ENCODE measurements at regions of chr13 and their contacts with region 1.

Region 1: DNA sequence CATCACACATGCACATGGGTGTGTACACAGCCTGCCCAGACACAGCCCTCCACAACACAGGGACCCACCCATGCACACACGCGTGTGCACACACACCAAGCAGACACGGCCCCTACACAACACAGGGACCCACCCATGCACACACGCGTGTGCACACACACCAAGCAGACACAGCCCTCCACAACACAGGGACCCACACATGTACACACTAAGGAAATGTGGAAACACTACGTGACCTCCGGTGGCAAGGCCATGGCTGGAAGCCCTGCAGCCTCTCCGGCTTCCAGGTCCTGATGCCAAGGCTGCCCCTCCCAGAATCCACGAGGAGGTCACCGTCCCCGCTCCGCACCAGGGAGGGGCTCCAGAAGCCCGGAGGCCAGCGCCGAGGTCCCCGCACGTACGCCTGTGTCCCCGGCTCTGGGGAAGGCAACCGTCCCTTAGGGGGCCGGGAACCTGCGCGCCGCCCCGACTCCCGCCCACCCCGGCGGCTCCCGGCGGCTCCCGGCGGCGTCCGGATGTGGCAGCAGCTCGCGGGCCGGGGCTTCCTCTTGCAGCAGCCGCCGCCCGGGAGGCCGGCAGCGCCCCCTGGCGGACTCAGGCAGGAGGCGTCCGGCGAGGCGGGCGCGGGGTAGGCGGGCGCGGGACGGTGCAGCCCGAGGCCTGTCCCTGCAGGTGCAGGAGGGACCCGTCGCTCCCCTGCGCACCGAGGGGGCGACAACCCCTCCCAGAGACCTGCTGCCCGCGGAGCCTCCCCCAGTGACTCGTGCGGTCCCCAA is 29.8 kb upstream of the GRTP1 start:
- DNase-seq: peak; percentile 47 to 94
- H3K4me3 ChIP-seq: peak overlapping the region; percentile 45
- CTCF ChIP-seq: peak in 1 of 3 donors; percentile 16
- POLR2A ChIP-seq: no peak

Region 2: DNA sequence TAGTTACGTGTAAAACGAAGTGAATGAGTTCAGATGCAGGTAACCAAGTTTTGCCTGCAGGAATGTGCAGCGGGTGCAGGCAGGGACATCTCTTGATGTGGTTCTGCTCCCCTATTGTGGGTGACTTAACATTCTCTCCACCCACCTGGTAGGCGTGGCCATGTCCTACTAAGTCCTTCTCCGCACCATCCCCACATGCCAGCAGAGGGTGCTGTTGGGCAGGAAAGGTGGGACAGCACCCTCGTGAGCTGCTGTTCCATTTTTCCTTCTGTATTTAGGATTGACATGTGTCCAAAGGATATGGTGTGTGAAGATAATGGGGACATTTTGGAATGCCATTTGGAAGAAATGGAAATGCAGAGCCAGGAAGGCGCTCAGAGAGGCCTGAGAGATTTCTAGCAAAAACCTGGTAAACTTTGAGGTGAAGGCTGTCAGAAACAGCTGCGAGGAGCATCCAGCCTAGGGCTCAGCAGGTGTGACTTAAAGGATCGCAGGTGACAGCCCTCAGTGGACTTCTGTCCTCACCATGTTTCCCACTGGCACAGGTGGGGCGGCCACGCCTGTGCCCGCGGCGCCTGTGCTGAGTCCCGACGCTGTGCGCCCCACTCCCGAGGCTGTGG is 451.0 kb before region 1 on chr13:
- intact Hi-C with region 1: loop called (anchors 10 kb)
- DNase-seq: peak; percentile 96 to 99
- H3K4me3 ChIP-seq: peak overlapping the region; percentile 18
- CTCF ChIP-seq: peak in 1 of 3 donors; percentile 65
- POLR2A ChIP-seq: no peak

Region 3: GRCh38 chr13:113275387-113275786 is 118.4 kb before region 1 on chr13:
- intact Hi-C with region 1: loop called (anchors 10 kb)
- DNase-seq: no peak
- H3K4me3 ChIP-seq: no peak overlapping the region
- CTCF ChIP-seq: no peak
- POLR2A ChIP-seq: no peak

Region 4: DNA sequence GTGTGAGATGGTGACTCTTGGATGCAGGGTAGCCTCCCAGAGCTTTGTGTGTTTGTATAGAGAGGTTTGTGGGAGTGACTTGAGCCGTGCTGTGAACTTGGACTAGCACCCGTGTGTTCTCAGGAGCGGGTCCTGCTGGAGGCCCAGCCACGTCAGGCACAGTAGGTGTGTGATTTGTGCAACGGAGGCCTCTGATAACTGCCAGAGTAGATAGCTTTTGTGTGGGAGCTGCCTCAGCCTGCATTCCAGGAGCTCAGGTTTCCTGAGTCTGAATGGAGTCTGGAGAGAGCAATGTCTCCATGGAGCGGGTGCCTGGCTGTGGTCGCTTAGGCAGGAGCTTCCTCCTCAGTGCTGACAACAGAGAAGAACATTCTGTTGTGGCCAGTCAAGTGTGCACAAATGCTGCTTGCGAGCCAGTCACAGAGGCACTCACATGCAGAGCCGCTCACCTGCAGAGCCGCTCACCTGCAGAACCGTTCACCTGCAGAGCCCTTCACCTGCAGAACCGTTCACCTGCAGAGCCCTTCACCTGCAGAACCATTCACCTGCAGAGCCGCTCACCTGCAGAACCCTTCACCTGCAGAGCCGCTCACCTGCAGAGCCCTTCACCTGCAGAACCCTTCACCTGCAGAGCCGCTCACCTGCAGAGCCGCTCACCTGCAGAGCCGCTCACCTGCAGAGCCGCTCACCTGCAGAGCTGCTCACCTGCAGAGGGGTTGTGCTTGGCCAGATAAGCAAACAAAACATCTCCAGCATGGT is 223.4 kb after region 1 on chr13:
- intact Hi-C with region 1: no loop called
- DNase-seq: no peak
- H3K4me3 ChIP-seq: no peak overlapping the region
- CTCF ChIP-seq: no peak
- POLR2A ChIP-seq: no peak